Activated B cell treated with CpG ODN at 0.5 μM for 24 hours (primary cell): ENCODE measurements at regions of chr4 and their contacts with region 1.

Region 1: GRCh38 chr4:88284439-88285234 is at the start of gene PPM1K:
- DNase-seq: peak; percentile 99
- ATAC-seq: peak; percentile 81
- H3K4me3 Mint-ChIP-seq: peak within 1 kb of the TSS; percentile 98
- H3K27ac Mint-ChIP-seq: peak within 1 kb of the TSS; percentile 99
- H3K4me1 Mint-ChIP-seq: peaks cover 54% of the 10 kb centered on the region
- H3K27me3 Mint-ChIP-seq: no peaks in the 10 kb centered on the region
- CTCF ChIP-seq: no peak
- total RNA-seq, gene PPM1K: 72.1 and 76.6 TPM in 2 replicates

Region 2: DNA sequence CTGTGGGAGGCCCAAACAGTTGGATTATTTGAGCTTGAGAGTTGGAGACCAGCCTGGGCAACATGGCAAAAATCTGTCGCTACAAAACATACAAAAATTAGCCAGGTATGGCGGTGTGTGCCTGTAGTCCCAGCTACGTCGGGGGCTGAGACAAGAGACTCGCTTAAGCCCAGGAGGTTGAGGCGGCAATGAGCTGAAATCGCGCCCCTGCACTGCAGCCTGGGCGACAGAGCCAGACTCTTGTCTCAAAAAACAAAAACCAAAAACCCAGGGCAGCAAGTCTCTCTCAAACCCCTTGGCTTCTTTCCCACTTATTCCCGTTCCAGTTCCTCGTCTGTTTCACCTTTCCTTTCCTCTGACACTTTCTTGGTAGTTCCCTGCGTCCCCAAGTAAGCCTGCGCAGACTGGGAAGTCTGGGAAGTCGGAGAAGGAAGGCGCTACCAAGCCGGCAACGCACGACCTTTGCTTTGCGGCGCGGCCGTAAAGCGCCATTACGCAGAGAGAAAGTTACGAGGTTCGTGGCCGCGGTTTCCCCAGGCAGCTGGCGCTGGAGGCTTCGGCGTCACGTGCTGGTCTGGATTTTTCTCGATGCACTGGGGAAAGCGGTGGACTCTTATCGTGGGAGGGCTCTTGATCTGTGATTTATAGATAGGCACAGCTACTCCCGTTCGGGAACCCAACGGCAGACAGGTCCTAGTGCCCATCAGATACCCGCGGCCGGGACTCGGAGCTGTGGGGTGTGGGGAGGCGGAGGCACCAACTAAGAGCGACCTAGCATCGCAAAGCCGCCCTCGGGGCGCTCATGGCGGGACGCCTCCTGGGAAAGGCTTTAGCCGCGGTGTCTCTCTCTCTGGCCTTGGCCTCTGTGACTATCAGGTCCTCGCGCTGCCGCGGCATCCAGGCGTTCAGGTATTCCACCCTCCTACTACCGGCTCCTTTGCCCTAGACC is 862.3 kb before region 1 on chr4 and contains the start of gene NUDT9:
- CTCF ChIA-PET with region 1: no interaction called
- POLR2A ChIA-PET with region 1: no interaction called
- intact Hi-C with region 1: loop called (anchors 5 kb)
- DNase-seq: peak; percentile 80
- ATAC-seq: peak; percentile 86
- H3K4me3 Mint-ChIP-seq: peak within 1 kb of the TSS; percentile 100
- H3K27ac Mint-ChIP-seq: peak within 1 kb of the TSS; percentile 99
- H3K4me1 Mint-ChIP-seq: peaks cover 40% of the 10 kb centered on the region
- H3K27me3 Mint-ChIP-seq: no peaks in the 10 kb centered on the region
- CTCF ChIP-seq: no peak
- total RNA-seq, gene NUDT9: 18.5 and 21.1 TPM in 2 replicates

Region 3: GRCh38 chr4:87865960-87866598 is 418.6 kb before region 1 on chr4:
- CTCF ChIA-PET with region 1: no interaction called
- POLR2A ChIA-PET with region 1: no interaction called
- intact Hi-C with region 1: no loop called
- DNase-seq: no peak
- ATAC-seq: no peak
- H3K4me3 Mint-ChIP-seq: no peak overlapping the region
- H3K27ac Mint-ChIP-seq: no peak overlapping the region
- H3K4me1 Mint-ChIP-seq: no peaks in the 10 kb centered on the region
- H3K27me3 Mint-ChIP-seq: peaks cover 9% of the 10 kb centered on the region
- CTCF ChIP-seq: no peak

Region 4: GRCh38 chr4:88033309-88033708 is 251.3 kb before region 1 on chr4:
- CTCF ChIA-PET with region 1: no interaction called
- POLR2A ChIA-PET with region 1: no interaction called
- intact Hi-C with region 1: no loop called
- DNase-seq: no peak
- ATAC-seq: no peak
- H3K4me3 Mint-ChIP-seq: no peak overlapping the region
- H3K27ac Mint-ChIP-seq: no peak overlapping the region
- H3K4me1 Mint-ChIP-seq: no peaks in the 10 kb centered on the region
- H3K27me3 Mint-ChIP-seq: no peaks in the 10 kb centered on the region
- CTCF ChIP-seq: no peak

Region 5: GRCh38 chr4:88045021-88045420 is 239.6 kb before region 1 on chr4:
- CTCF ChIA-PET with region 1: no interaction called
- POLR2A ChIA-PET with region 1: no interaction called
- intact Hi-C with region 1: no loop called
- DNase-seq: no peak
- ATAC-seq: no peak
- H3K4me3 Mint-ChIP-seq: no peak overlapping the region
- H3K27ac Mint-ChIP-seq: no peak overlapping the region
- H3K4me1 Mint-ChIP-seq: no peaks in the 10 kb centered on the region
- H3K27me3 Mint-ChIP-seq: no peaks in the 10 kb centered on the region
- CTCF ChIP-seq: no peak

Region 6: GRCh38 chr4:88244816-88245579 is 39.6 kb before region 1 on chr4:
- CTCF ChIA-PET with region 1: interaction called, 4 read pairs
- POLR2A ChIA-PET with region 1: interaction called, 11 read pairs
- intact Hi-C with region 1: no loop called
- DNase-seq: no peak
- ATAC-seq: peak; percentile 88
- H3K4me3 Mint-ChIP-seq: peak overlapping the region; percentile 69
- H3K27ac Mint-ChIP-seq: no peak overlapping the region
- H3K4me1 Mint-ChIP-seq: peaks cover 11% of the 10 kb centered on the region
- H3K27me3 Mint-ChIP-seq: no peaks in the 10 kb centered on the region
- CTCF ChIP-seq: no peak

Region 7: DNA sequence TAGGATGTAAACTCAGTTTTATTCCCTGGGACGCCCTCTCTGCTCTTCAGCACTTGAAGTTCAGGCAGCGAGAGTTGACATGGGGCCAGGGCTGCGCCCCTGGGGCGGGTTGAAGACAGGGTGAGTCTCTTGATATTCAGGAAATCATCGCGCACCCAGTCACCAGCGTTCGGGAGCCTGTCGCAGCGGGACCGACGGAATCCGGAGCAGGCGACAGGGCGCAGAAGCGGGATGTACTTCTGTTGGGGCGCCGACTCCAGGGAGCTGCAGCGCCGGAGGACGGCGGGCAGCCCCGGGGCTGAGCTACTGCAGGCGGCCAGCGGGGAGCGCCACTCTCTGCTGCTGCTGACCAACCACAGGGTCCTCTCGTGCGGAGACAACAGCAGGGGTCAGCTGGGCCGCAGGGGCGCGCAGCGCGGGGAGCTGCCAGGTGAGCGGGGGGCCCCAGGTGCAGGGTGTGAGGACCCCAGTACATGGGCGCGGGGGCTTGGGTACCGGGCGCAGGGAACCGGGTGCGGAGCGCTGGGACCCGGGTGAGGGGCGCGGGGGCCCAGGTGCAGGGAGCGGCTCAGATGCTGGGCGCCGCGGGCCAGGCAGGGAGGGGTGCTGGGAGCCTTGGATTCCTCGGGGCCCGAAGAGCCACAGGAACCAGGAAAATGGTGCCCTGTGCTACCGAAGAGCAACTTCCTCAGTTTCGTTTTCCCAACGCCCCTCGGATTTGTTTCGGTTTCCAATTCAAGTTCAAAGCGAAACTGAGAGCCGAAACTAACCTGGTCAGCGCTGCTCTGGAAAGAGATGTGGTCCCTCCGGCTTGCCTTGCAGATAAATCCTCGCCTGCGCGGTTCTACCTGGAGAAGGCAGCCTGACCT is 94.3 kb after region 1 on chr4 and contains the start of gene HERC6:
- CTCF ChIA-PET with region 1: interaction called, 4 read pairs
- POLR2A ChIA-PET with region 1: interaction called, 35 read pairs
- intact Hi-C with region 1: loop called (anchors 1 kb)
- DNase-seq: peak; percentile 64
- ATAC-seq: peak; percentile 80
- H3K4me3 Mint-ChIP-seq: peak within 1 kb of the TSS; percentile 92
- H3K27ac Mint-ChIP-seq: peak within 1 kb of the TSS; percentile 91
- H3K4me1 Mint-ChIP-seq: peaks cover 31% of the 10 kb centered on the region
- H3K27me3 Mint-ChIP-seq: no peaks in the 10 kb centered on the region
- CTCF ChIP-seq: no peak
- total RNA-seq, gene HERC6: 11.4 and 12.2 TPM in 2 replicates

Region 8: DNA sequence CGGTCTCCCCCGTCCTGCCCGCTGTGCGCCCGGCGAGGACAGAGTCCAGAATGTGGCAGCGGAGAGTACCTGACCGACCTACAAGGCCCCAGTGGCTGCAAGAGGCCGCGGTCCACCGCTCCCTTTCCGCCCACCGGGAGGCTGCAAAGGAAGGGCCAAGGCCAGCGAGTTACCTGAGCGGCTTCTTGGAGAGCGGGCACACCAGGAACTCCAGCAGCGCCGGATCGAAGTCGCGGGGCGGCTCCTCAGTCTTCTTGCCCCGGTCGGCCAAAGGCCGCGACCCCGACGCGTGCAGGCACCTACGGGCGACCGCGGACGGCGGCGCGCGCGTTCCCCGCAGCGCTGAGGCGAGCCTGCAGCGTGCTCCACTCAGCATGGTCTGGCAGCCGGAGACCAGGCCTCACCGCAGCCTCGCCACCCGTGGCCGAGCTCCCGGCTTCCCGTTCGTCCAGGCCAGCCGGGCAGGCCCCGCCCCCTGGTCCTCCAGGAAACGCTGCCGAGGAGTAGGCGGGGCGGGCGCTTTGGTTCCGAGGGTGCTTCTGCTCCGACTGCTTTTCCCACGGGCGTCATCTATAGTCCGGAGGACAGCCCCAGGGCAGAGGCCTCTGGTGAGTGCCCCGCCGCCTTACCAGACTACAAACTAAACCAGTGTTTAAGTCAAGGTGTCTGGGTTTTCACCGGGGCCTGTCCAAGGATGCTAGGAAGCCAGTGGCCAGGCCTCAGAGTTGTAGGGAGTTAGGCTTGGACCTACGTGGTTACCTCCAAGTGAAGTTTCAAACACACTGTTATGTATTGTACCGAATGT is 238.9 kb after region 1 on chr4 and contains the start of gene PYURF:
- CTCF ChIA-PET with region 1: no interaction called
- POLR2A ChIA-PET with region 1: interaction called, 11 read pairs
- intact Hi-C with region 1: loop called (anchors 2 kb)
- DNase-seq: peak; percentile 72
- ATAC-seq: peak; percentile 84
- H3K4me3 Mint-ChIP-seq: peak within 1 kb of the TSS; percentile 95
- H3K27ac Mint-ChIP-seq: peak within 1 kb of the TSS; percentile 85
- H3K4me1 Mint-ChIP-seq: peaks cover 18% of the 10 kb centered on the region
- H3K27me3 Mint-ChIP-seq: no peaks in the 10 kb centered on the region
- CTCF ChIP-seq: no peak
- total RNA-seq, gene PYURF: 42.2 and 48.3 TPM in 2 replicates